ENCODE measurements at regions of chr1 and their contacts with region 1.

Region 1: DNA sequence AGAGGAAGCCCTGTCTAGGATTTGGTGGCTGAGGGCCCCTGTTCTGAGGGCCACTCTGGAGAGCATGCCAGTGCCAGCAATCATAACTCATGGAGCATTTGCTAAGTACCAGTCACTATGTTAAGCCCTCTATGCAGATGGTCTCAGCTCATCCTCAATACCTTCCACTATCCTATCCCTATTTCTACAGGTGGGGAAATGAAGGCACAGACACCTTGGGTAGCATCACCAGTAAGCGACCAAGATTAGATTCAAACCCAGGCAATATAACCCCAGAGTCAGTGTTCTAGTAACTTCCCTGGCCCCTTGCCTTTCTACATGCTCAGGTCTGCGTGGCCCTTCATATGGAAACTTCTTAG is 7.9 kb upstream of the NBPF1 start:
- DNase-seq: no peak
- CTCF ChIP-seq: no peak

Region 2: DNA sequence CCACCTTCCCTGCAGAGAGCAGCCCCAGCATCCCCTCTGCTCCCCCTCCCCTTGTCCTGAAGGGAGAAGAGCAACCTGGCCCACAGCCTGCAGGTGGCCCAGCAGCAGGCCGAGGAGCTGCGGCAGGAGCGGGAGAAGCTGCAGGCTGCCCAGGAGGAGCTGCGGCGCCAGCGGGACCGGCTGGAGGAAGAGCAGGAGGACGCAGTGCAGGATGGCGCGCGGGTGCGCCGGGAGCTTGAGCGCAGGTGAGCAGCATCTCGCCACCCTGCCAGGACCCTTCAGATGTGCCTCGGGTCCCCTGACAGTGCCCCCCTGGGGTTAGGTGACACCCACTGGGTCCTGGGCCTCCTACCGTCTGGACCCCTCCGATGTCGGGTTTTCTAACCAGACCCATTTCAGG is 322.8 kb after region 1 on chr1:
- in situ Hi-C with region 1: loop called (anchors 5 kb)
- DNase-seq: no peak
- CTCF ChIP-seq: no peak

Measured in GM13976 (cell line).